ENCODE measurements at regions of chr4 and their contacts with region 1.

Region 1: DNA sequence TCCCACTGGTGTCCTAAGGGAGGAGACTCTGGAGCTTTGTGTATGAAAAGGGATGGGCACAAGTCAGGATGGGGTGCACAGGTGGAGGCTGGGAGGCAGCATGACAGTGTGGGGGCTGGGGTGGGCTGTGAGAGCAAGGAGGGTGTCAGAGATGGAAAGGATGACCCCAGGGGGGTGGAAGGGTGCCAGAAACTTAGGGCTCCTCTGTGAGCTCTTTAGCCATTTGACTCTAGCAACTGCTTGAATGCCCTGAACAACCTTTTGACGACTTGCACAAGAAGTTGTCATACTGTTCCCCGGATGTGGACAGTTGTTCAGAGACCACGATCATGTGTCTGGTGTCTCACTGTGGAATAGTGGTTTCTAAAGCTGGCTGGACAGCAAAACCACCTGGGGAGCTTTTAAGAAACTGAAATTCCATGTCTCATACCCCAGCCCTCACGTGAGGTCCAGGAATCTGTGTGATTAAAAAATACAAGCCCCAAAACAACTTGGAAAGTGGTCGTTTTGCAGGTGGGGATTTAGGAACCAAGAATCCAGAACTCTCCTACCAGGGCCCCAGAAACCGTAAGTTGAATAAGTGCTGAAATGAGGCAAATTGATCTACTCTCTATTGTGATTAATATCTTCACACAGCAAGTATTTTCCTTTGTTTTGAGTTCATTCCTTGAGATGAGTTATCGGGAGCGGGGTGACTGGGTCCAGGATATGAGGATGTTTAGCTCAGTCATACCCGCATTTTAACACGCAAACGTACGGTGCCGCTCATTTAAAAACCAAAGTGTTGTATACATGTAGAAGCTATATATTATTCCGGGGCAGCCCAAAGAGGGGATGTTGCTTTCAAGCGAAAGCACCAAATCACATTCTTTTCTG is 3.4 kb downstream of the RHOH start:
- DNase-seq: peak in 8 of 9 donors; percentile 51 to 73 (median 61)
- ATAC-seq: peak; percentile 42
- H3K4me3 ChIP-seq: peak overlapping the region; percentile 96
- H3K4me3 Mint-ChIP-seq: peak overlapping the region; percentile 96 to 100 (median 99)
- H3K27ac ChIP-seq: peak overlapping the region; percentile 100
- H3K27ac Mint-ChIP-seq: peak overlapping the region; percentile 98 to 100 (median 99)
- H3K4me1 ChIP-seq: peaks cover 19 to 20% of the 10 kb centered on the region in 2 donors
- H3K4me1 Mint-ChIP-seq: peaks cover 37 to 54% (median 44%) of the 10 kb centered on the region in 7 donors
- H3K27me3 ChIP-seq: no peaks in the 10 kb centered on the region
- H3K27me3 Mint-ChIP-seq: peaks cover 0 to 5% (median 0%) of the 10 kb centered on the region in 5 donors

Region 2: GRCh38 chr4:38663801-38664705 is 1536.2 kb before region 1 on chr4 and contains the start of gene KLF3:
- CTCF ChIA-PET with region 1: no interaction called
- POLR2A ChIA-PET with region 1: no interaction called
- intact Hi-C with region 1: loop called in 1 of 2 experiments (anchors 10 kb)
- DNase-seq: peak in 7 of 9 donors; percentile 91 to 95 (median 93)
- ATAC-seq: peak; percentile 86
- H3K4me3 ChIP-seq: peak within 1 kb of the TSS; percentile 64
- H3K4me3 Mint-ChIP-seq: peak within 1 kb of the TSS; percentile 85 to 100 (median 99)
- H3K27ac ChIP-seq: peak within 1 kb of the TSS; percentile 98
- H3K27ac Mint-ChIP-seq: peak within 1 kb of the TSS; percentile 85 to 100 (median 95)
- H3K4me1 ChIP-seq: peaks cover 33 to 50% of the 10 kb centered on the region in 2 donors
- H3K4me1 Mint-ChIP-seq: peaks cover 40 to 57% (median 53%) of the 10 kb centered on the region in 7 donors
- H3K27me3 ChIP-seq: no peaks in the 10 kb centered on the region
- H3K27me3 Mint-ChIP-seq: peaks cover 0 to 63% (median 0%) of the 10 kb centered on the region in 5 donors
- total RNA-seq, gene KLF3: 21.0 to 142 (median 132) TPM

Region 3: DNA sequence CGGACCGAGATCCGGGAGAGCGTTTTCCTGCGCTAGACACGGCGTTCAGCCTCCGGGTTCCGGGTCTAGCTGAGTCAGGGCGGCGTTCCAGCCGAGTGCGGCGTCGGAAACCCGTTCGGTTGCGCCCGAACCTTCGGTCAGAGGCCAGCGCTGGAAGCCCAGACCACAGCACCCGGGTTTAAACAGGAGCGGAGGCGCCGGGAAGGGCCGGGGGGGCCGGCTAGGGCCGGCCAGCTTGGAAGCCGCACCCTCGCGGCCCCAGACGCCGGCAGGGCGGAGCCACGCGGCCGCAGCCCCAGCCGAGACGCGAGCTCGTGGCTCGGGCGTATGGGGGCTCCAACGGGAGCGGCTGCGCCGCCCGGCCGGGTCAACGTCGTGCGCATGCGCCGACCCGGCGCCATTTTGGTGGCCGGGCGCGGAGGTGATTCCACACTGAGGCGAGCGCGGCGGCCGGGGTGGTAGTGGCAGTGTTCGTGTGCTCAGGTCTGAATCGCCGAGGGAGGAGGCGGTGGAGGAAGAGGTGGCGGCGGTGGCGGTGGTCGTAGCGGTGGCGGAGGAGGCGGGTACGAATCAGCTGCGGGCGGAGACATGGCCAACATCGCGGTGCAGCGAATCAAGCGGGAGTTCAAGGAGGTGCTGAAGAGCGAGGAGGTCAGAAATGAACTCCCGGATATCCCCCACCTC is 502.4 kb before region 1 on chr4 and contains the start of gene UBE2K:
- CTCF ChIA-PET with region 1: no interaction called
- POLR2A ChIA-PET with region 1: no interaction called
- intact Hi-C with region 1: loop called in 1 of 2 experiments (anchors 5 kb)
- DNase-seq: peak; percentile 82 to 97 (median 91)
- ATAC-seq: peak; percentile 93
- H3K4me3 ChIP-seq: peak within 1 kb of the TSS; percentile 94
- H3K4me3 Mint-ChIP-seq: peak within 1 kb of the TSS; percentile 95 to 100 (median 98)
- H3K27ac ChIP-seq: peak within 1 kb of the TSS; percentile 98
- H3K27ac Mint-ChIP-seq: peak within 1 kb of the TSS; percentile 96 to 99 (median 97)
- H3K4me1 ChIP-seq: peaks cover 17 to 22% of the 10 kb centered on the region in 2 donors
- H3K4me1 Mint-ChIP-seq: peaks cover 19 to 53% (median 37%) of the 10 kb centered on the region in 7 donors
- H3K27me3 ChIP-seq: no peaks in the 10 kb centered on the region
- H3K27me3 Mint-ChIP-seq: no peaks in the 10 kb centered on the region
- total RNA-seq, gene UBE2K: 31.1 to 85.0 (median 43.7) TPM

Region 4: GRCh38 chr4:40212674-40213527 is 12.7 kb after region 1 on chr4:
- CTCF ChIA-PET with region 1: interaction called, 5 read pairs
- POLR2A ChIA-PET with region 1: interaction called, 238 read pairs
- intact Hi-C with region 1: loop called in 1 of 2 experiments (anchors 2 kb)
- DNase-seq: no peak
- ATAC-seq: no peak
- H3K4me3 ChIP-seq: peak overlapping the region; percentile 41
- H3K4me3 Mint-ChIP-seq: peak overlapping the region; percentile 52 to 100 (median 76)
- H3K27ac ChIP-seq: peak overlapping the region; percentile 100
- H3K27ac Mint-ChIP-seq: peak overlapping the region; percentile 79 to 99 (median 94)
- H3K4me1 ChIP-seq: peaks cover 71 to 87% of the 10 kb centered on the region in 2 donors
- H3K4me1 Mint-ChIP-seq: peaks cover 76 to 99% (median 90%) of the 10 kb centered on the region in 7 donors
- H3K27me3 ChIP-seq: no peaks in the 10 kb centered on the region
- H3K27me3 Mint-ChIP-seq: no peaks in the 10 kb centered on the region

Region 5: DNA sequence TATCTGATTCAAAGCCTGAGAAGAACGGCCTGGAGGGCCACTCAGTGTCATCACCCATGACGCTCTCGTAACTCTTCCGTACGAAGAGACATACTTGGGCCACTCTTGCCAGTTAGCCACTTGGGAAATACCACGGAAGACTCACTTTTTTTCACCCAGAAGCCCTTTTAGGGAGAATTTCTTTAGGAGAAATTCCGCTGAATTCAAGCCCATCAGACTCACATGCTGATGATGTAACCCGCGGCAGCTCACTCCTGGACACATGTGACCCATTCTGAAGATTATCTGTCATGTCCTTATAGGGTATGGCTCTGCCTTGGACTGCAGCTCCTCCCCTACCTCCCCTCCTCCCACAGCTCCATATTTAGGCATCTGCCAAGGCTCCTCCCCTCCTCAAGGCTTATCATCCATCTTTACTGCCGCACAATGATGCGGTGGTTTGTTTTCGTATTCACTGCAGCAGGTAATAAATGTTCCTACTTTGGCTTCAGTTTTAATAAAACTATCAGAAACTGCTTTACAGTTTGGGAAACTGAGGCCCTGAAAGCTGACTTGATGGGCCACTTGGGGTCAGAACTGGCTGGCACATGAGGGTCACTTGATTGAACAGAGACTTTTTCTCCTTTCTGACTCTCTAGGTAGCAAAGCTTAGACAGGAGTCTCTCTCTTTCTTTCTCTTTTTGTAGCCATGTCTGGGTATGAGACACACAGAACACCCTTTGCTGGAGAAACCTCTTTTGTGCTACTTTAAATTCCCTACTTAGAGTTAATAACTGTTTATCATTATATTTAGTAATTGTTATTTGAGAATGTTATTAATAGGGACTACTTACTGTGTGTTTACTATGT is 38.7 kb after region 1 on chr4:
- CTCF ChIA-PET with region 1: interaction called, 4 read pairs
- POLR2A ChIA-PET with region 1: interaction called, 46 read pairs
- intact Hi-C with region 1: loop called in 1 of 2 experiments (anchors 2 kb)
- DNase-seq: peak in 8 of 9 donors; percentile 54 to 90 (median 75)
- ATAC-seq: peak; percentile 94
- H3K4me3 ChIP-seq: peak overlapping the region; percentile 49
- H3K4me3 Mint-ChIP-seq: peak overlapping the region; percentile 64 to 87 (median 79)
- H3K27ac ChIP-seq: peak overlapping the region; percentile 79
- H3K27ac Mint-ChIP-seq: peak overlapping the region; percentile 89 to 98 (median 94)
- H3K4me1 ChIP-seq: peaks cover 81 to 90% of the 10 kb centered on the region in 2 donors
- H3K4me1 Mint-ChIP-seq: peaks cover 54 to 97% (median 94%) of the 10 kb centered on the region in 7 donors
- H3K27me3 ChIP-seq: no peaks in the 10 kb centered on the region
- H3K27me3 Mint-ChIP-seq: no peaks in the 10 kb centered on the region

Region 6: DNA sequence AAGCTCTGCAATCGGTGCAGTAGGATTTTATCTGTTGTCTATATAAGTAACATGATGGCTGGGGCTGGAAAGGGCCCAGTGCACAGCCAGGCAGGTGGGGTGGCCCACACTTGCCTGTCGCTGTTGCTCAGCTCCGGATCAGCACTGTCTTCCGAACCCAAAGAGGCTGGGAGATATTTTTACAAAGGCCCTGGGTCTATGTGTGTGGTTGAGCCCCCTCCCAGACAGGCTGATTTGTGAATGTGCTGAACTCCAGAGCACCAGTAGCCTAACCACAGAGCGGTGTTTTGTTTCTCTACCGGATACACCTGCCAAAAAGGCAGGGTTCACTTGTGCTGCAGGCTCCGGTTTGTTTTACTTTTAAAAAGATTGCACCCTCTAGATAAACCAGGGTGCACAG is 101.4 kb after region 1 on chr4:
- CTCF ChIA-PET with region 1: interaction called, 6 read pairs
- POLR2A ChIA-PET with region 1: interaction called, 229 read pairs
- intact Hi-C with region 1: loop called in 1 of 2 experiments (anchors 1 kb)
- DNase-seq: peak in 8 of 9 donors; percentile 36 to 96 (median 92)
- ATAC-seq: peak; percentile 92
- H3K4me3 ChIP-seq: peak overlapping the region; percentile 17
- H3K4me3 Mint-ChIP-seq: peak overlapping the region; percentile 56 to 88 (median 76)
- H3K27ac ChIP-seq: peak overlapping the region; percentile 74
- H3K27ac Mint-ChIP-seq: peak overlapping the region in 8 of 9 donors; percentile 94 to 99 (median 98)
- H3K4me1 ChIP-seq: peaks cover 87 to 90% of the 10 kb centered on the region in 2 donors
- H3K4me1 Mint-ChIP-seq: peaks cover 60 to 92% (median 82%) of the 10 kb centered on the region in 7 donors
- H3K27me3 ChIP-seq: no peaks in the 10 kb centered on the region
- H3K27me3 Mint-ChIP-seq: no peaks in the 10 kb centered on the region

Region 7: DNA sequence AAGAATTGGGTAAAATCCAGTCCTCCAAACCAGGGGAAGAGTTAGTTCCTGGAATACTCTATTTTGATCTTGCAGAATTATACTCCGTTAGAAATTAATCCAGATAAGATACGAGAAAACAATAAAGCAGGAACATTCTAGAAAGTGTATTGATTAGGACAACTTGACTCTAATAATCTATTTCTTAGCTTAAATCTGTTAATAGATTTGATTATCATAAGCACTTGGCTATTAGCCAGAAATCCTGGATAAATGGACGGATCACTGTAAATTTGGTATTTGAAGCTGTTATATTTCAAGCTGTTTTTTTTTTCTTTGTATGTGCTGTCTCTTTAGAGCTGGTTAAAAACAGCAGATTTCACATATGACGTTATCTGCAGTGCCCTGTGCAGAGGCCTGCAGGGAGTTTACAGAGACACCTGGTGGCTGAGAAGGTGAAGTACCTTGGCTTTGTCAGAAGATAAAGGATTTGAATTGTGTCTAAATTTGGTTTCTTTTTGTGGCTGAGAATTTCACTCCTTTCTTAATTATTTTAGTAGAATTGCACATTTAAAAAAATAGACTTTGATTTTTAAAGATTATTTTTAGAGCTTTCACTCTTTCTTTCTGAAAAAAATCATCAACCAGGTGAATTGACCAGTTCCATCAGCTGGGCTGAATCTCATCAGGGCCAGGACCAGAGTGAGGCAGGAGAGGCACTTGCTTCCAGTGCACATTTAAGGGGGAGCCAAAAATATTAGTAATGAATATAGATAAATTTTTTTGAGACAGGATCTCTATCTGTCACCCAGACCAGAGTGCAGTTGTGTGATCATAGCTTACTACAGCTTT is 125.2 kb after region 1 on chr4:
- CTCF ChIA-PET with region 1: interaction called, 4 read pairs
- POLR2A ChIA-PET with region 1: interaction called, 13 read pairs
- intact Hi-C with region 1: no loop called
- DNase-seq: peak in 7 of 9 donors; percentile 70 to 85 (median 82)
- ATAC-seq: peak; percentile 100
- H3K4me3 ChIP-seq: no peak overlapping the region
- H3K4me3 Mint-ChIP-seq: peak overlapping the region in 4 of 10 donors; percentile 0 to 48 (median 14)
- H3K27ac ChIP-seq: peak overlapping the region; percentile 45
- H3K27ac Mint-ChIP-seq: peak overlapping the region in 8 of 9 donors; percentile 25 to 87 (median 64)
- H3K4me1 ChIP-seq: peaks cover 0 to 8% of the 10 kb centered on the region in 2 donors
- H3K4me1 Mint-ChIP-seq: peaks cover 13 to 40% (median 35%) of the 10 kb centered on the region in 7 donors
- H3K27me3 ChIP-seq: no peaks in the 10 kb centered on the region
- H3K27me3 Mint-ChIP-seq: peaks cover 0 to 7% (median 4%) of the 10 kb centered on the region in 5 donors